Ovary (tissue), 10 donors: ENCODE measurements at regions of chr3 and their contacts with region 1.

Region 1: DNA sequence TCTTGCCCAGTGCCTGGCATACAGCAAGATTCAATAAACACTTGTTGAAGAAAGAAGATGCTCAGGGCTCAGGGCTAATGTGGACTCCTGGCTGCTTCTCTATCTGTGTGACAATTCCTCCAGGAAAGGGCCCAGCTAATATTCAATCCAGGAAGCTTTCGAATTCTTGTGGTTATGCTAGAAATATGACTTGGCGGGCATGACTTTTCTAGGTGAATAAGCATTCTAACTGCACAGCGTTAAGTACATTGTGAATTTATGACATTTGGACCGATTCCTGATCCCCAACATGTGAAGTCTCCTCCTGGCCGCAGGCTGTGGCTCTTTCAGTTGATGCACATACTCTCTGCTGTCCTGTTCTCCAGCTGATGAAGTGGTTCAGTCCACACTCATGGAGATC is 117.0 kb downstream of the IMPG2 start:
- DNase-seq: no peak
- H3K4me3 ChIP-seq: no peak overlapping the region
- H3K27ac ChIP-seq: no peak overlapping the region
- H3K4me1 ChIP-seq: peaks cover 2% of the 10 kb centered on the region
- H3K27me3 ChIP-seq: no peaks in the 10 kb centered on the region
- CTCF ChIP-seq: no peak
- EP300 ChIP-seq: no peak
- POLR2A ChIP-seq: no peak

Region 2: GRCh38 chr3:101095693-101096430 is 107.5 kb before region 1 on chr3:
- intact Hi-C with region 1: no loop called
- DNase-seq: no peak
- H3K4me3 ChIP-seq: no peak overlapping the region
- H3K27ac ChIP-seq: no peak overlapping the region
- H3K4me1 ChIP-seq: no peaks in the 10 kb centered on the region
- H3K27me3 ChIP-seq: no peaks in the 10 kb centered on the region
- CTCF ChIP-seq: no peak
- EP300 ChIP-seq: no peak
- POLR2A ChIP-seq: no peak

Region 3: GRCh38 chr3:101381809-101382208 is 178.4 kb after region 1 on chr3:
- intact Hi-C with region 1: loop called in 1 of 4 experiments (anchors 10 kb)
- DNase-seq: no peak
- H3K4me3 ChIP-seq: no peak overlapping the region
- H3K27ac ChIP-seq: no peak overlapping the region
- H3K4me1 ChIP-seq: peaks cover 9% of the 10 kb centered on the region
- H3K27me3 ChIP-seq: no peaks in the 10 kb centered on the region
- CTCF ChIP-seq: peak in 2 of 3 donors; percentile 16 to 40
- EP300 ChIP-seq: no peak
- POLR2A ChIP-seq: no peak